PC-3 (cell line): ENCODE measurements at regions of chr12 and their contacts with region 1.

Region 1: DNA sequence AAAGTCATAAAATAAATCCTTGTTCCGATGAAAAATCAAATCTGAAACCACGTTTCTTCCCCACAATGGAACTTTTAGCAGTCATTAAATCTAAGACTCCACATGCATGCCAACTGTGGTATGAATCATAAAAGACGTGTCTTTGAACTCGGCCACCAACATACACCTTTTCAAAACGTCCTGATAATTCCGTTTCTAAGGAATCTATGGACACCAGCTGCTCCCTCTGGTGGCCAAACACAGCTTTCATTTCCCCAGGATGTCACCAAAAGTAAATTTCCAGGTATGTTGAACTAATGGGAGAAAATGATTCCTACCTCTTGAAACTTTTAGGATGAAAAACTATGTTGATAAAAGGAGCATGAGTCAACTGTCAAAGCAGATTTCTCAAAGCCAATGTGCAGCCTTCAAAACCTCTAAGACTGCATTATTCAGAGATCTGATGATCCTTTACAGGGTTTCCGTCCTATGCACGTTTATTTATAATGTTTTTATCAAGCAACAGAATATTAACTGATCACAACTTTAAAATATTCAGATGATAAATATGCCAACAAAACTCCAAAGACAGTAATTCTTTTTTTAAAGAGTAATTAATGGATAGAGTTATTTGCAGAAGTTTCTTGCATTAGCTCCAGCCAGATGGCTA is 96.2 kb downstream of the CIT start:
- DNase-seq: peak; percentile 91
- ATAC-seq: peak; percentile 96
- H3K4me3 ChIP-seq: no peak overlapping the region
- H3K27ac ChIP-seq: peak overlapping the region; percentile 13; the same call in 1 of the 2 replicates
- H3K4me1 ChIP-seq: peaks cover 4% of the 10 kb centered on the region; the same call in 1 of the 2 replicates
- H3K27me3 ChIP-seq: no peaks in the 10 kb centered on the region
- CTCF ChIP-seq: peak; percentile 99

Region 2: GRCh38 chr12:119446459-119446858 is 334.5 kb before region 1 on chr12:
- CTCF ChIA-PET with region 1: no interaction called
- POLR2A ChIA-PET with region 1: no interaction called
- intact Hi-C with region 1: no loop called
- DNase-seq: peak; percentile 69
- ATAC-seq: peak; percentile 79
- H3K4me3 ChIP-seq: no peak overlapping the region
- H3K27ac ChIP-seq: no peak overlapping the region
- H3K4me1 ChIP-seq: peaks cover 19% of the 10 kb centered on the region
- H3K27me3 ChIP-seq: peaks cover 25% of the 10 kb centered on the region
- CTCF ChIP-seq: no peak

Region 3: DNA sequence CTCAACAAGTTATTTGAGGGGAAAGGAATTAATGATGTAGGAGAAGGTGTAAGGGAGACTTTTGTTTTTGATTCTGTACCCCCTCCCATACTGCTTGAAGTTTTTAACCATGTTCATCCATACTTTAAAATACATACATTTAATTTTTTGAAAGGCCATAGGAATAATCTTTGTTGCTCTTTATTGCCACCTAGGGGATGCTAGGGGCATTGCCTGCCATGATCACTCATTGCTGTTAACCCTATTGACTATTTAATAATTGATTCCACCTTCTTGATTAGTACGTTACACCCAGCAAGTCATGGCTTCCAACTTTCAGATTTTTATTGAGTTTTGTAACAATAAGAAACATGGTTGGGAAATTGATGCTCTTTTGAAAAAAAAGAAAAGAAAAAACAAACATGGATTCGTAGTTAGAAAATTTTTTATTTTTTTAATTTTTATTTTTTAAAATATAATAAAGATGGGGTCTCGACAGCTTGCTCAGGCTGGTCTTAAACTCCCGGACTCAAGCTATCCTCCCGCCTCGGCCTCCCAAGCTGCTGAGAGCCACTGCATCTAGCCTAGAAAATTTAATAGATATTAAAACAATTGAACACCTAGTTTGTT is 121.5 kb before region 1 on chr12:
- CTCF ChIA-PET with region 1: interaction called, 8 read pairs
- POLR2A ChIA-PET with region 1: no interaction called
- intact Hi-C with region 1: loop called (anchors 1 kb)
- DNase-seq: peak; percentile 71
- ATAC-seq: peak; percentile 45
- H3K4me3 ChIP-seq: no peak overlapping the region
- H3K27ac ChIP-seq: no peak overlapping the region
- H3K4me1 ChIP-seq: no peaks in the 10 kb centered on the region
- H3K27me3 ChIP-seq: 0 out of 2 replicates have a peak, but pooled peaks cover 5% of the 10 kb centered on the region
- CTCF ChIP-seq: peak; percentile 88

Region 4: DNA sequence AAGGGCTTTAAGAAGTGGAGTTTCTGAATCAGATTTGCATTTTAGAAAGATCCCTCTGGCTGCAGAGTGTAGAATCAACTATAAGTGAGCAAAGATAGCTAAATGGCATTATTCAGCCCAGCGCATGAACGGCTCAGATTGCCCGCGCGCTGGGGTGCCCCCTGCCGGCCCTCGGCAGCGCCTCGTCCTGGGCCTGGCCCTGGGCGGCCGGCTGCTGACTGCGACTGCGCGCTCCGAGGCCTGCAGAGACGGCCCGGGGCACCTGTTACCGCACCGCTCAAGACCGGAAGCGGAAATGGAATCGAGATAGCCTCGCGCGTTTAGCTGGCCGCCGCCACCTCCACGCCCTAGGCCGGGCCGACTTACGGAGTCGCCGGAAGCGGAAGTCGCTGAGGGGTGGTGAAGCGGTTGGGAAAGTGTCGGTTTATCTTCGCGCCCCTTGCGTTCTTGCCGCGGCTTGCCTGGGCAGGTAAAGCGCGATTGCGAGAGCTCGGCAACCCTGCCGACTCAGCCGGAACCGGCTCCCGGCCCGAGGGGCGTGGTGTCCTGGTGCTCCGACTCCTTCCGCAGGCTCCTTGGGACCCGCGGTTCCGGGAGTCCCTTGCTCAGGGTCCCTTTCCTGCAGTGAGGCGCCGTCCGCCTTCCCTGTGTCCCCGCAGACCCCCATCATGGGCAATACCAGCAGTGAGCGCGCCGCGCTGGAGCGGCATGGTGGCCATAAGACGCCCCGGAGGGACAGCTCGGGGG is 113.2 kb before region 1 on chr12 and contains the start of gene PRKAB1:
- CTCF ChIA-PET with region 1: interaction called, 5 read pairs
- POLR2A ChIA-PET with region 1: no interaction called
- intact Hi-C with region 1: loop called (anchors 1 kb)
- DNase-seq: peak; percentile 99
- ATAC-seq: peak; percentile 95
- H3K4me3 ChIP-seq: peak within 1 kb of the TSS; percentile 92
- H3K27ac ChIP-seq: peak within 1 kb of the TSS; percentile 82
- H3K4me1 ChIP-seq: peaks cover 22% of the 10 kb centered on the region
- H3K27me3 ChIP-seq: no peaks in the 10 kb centered on the region
- CTCF ChIP-seq: peak; percentile 97
- total RNA-seq, gene PRKAB1: 16.0 and 16.2 TPM in 2 replicates

Region 5: GRCh38 chr12:119692997-119693396 is 87.9 kb before region 1 on chr12:
- CTCF ChIA-PET with region 1: interaction called, 9 read pairs
- POLR2A ChIA-PET with region 1: no interaction called
- intact Hi-C with region 1: loop called (anchors 1 kb)
- DNase-seq: peak; percentile 98
- ATAC-seq: peak; percentile 97
- H3K4me3 ChIP-seq: no peak overlapping the region
- H3K27ac ChIP-seq: peak overlapping the region; percentile 75
- H3K4me1 ChIP-seq: peaks cover 19% of the 10 kb centered on the region
- H3K27me3 ChIP-seq: no peaks in the 10 kb centered on the region
- CTCF ChIP-seq: no peak

Region 6: DNA sequence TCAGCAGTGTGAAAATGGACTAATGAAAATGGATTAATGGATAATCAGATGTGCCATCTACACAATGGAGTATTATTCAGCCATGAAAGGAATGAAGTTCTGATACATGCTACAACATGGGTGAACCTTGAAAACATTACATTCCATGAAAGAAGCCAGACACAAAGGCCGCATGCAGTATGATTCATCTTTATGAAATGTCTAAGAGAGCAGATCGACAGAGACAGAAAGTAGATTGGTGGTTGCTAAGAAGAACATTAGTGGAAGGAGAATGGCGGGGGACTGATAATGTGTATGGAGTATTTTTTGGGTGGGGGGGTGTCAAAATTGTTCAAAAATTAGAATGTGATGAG is 65.7 kb before region 1 on chr12:
- CTCF ChIA-PET with region 1: interaction called, 3 read pairs
- POLR2A ChIA-PET with region 1: no interaction called
- intact Hi-C with region 1: loop called (anchors 2 kb)
- DNase-seq: peak; percentile 14
- ATAC-seq: no peak
- H3K4me3 ChIP-seq: no peak overlapping the region
- H3K27ac ChIP-seq: no peak overlapping the region
- H3K4me1 ChIP-seq: peaks cover 22% of the 10 kb centered on the region
- H3K27me3 ChIP-seq: no peaks in the 10 kb centered on the region
- CTCF ChIP-seq: no peak

Region 7: GRCh38 chr12:119742700-119743099 is 38.2 kb before region 1 on chr12:
- CTCF ChIA-PET with region 1: no interaction called
- POLR2A ChIA-PET with region 1: no interaction called
- intact Hi-C with region 1: no loop called
- DNase-seq: no peak
- ATAC-seq: no peak
- H3K4me3 ChIP-seq: no peak overlapping the region
- H3K27ac ChIP-seq: no peak overlapping the region
- H3K4me1 ChIP-seq: no peaks in the 10 kb centered on the region
- H3K27me3 ChIP-seq: no peaks in the 10 kb centered on the region
- CTCF ChIP-seq: no peak

Region 8: GRCh38 chr12:119902084-119902509 is 121.2 kb after region 1 on chr12:
- CTCF ChIA-PET with region 1: no interaction called
- POLR2A ChIA-PET with region 1: no interaction called
- intact Hi-C with region 1: loop called (anchors 2 kb)
- DNase-seq: peak; percentile 84
- ATAC-seq: peak; percentile 96
- H3K4me3 ChIP-seq: no peak overlapping the region
- H3K27ac ChIP-seq: no peak overlapping the region
- H3K4me1 ChIP-seq: no peaks in the 10 kb centered on the region
- H3K27me3 ChIP-seq: no peaks in the 10 kb centered on the region
- CTCF ChIP-seq: peak; percentile 95

Region 9: GRCh38 chr12:119938049-119938667 is 157.2 kb after region 1 on chr12:
- CTCF ChIA-PET with region 1: no interaction called
- POLR2A ChIA-PET with region 1: no interaction called
- intact Hi-C with region 1: loop called (anchors 2 kb)
- DNase-seq: peak; percentile 86
- ATAC-seq: peak; percentile 22; the same call in 1 of the 2 replicates
- H3K4me3 ChIP-seq: no peak overlapping the region
- H3K27ac ChIP-seq: no peak overlapping the region
- H3K4me1 ChIP-seq: peaks cover 14% of the 10 kb centered on the region
- H3K27me3 ChIP-seq: no peaks in the 10 kb centered on the region
- CTCF ChIP-seq: peak; percentile 85